ENCODE measurements at regions of chr1 and their contacts with region 1.

Region 1: DNA sequence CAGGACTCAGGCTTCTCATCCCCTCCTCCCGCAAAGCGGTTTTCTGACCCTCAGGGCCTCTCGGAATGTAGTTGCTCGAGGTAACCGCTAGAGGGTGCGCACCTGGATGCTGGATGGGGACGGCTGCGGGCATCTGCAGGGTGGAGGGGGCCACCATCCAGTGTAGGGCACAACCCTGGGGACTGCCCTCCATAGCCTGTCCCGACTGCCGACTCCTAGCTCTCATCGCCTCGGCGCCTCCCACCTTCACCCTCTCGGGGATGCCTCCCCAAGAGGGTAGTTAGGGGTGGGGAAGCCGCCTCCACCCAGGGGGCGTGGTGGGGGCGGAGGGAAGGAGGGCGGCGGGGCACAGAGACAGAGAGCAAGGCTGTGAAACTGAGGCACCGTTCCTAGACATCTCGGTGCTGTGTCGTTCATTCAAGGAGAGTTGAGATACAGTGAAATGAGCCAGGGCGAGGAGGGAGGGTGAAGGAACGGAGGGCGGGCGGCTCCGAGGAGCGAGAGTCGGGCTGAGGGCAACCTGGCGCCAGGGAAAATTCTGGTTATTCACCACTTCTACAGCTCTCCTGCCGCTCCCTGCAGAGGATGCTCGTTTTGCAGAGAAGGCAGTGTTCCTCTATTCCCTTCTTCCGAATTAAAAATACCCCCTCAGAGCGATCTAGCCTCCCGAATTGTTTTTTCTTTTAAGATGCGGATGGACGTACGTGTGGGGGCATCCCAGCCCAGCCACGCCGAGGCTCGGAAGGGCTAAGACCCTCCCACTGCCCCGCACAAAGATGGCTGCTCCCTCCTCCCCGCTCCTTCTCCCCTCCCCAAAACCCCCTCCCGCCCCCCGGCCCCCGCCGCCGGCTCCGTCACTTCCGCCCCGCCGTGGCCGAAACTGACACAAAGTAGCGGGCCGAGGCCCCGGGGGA is at the start of gene ATP8B2:
- DNase-seq: peak; percentile 91
- H3K4me3 Mint-ChIP-seq: peak within 1 kb of the TSS; percentile 98
- H3K27ac Mint-ChIP-seq: peak within 1 kb of the TSS; percentile 94
- H3K4me1 Mint-ChIP-seq: peaks cover 36% of the 10 kb centered on the region
- H3K27me3 Mint-ChIP-seq: no peaks in the 10 kb centered on the region
- total RNA-seq, gene ATP8B2: 58.5 to 59.9 TPM

Region 2: GRCh38 chr1:154256686-154257085 is 68.2 kb before region 1 on chr1:
- CTCF ChIA-PET with region 1: no interaction called
- POLR2A ChIA-PET with region 1: no interaction called
- intact Hi-C with region 1: no loop called
- DNase-seq: no peak
- H3K4me3 Mint-ChIP-seq: no peak overlapping the region
- H3K27ac Mint-ChIP-seq: no peak overlapping the region
- H3K4me1 Mint-ChIP-seq: no peaks in the 10 kb centered on the region
- H3K27me3 Mint-ChIP-seq: no peaks in the 10 kb centered on the region

Region 3: GRCh38 chr1:154304664-154305337 is 20.1 kb before region 1 on chr1:
- CTCF ChIA-PET with region 1: interaction called, 11 read pairs
- POLR2A ChIA-PET with region 1: interaction called, 5 read pairs
- intact Hi-C with region 1: loop called (anchors 2 kb)
- DNase-seq: peak; percentile 83
- H3K4me3 Mint-ChIP-seq: no peak overlapping the region
- H3K27ac Mint-ChIP-seq: peak overlapping the region; percentile 38
- H3K4me1 Mint-ChIP-seq: peaks cover 29% of the 10 kb centered on the region
- H3K27me3 Mint-ChIP-seq: no peaks in the 10 kb centered on the region

Region 4: GRCh38 chr1:154344977-154345837 is 20.3 kb after region 1 on chr1:
- CTCF ChIA-PET with region 1: interaction called, 120 read pairs
- POLR2A ChIA-PET with region 1: interaction called, 7 read pairs
- intact Hi-C with region 1: loop called (anchors 1 kb)
- DNase-seq: peak; percentile 88
- H3K4me3 Mint-ChIP-seq: peak overlapping the region; percentile 61
- H3K27ac Mint-ChIP-seq: peak overlapping the region; percentile 95
- H3K4me1 Mint-ChIP-seq: peaks cover 77% of the 10 kb centered on the region
- H3K27me3 Mint-ChIP-seq: no peaks in the 10 kb centered on the region

Region 5: GRCh38 chr1:154352581-154353459 is 27.9 kb after region 1 on chr1:
- CTCF ChIA-PET with region 1: interaction called, 13 read pairs
- POLR2A ChIA-PET with region 1: no interaction called
- intact Hi-C with region 1: no loop called
- DNase-seq: peak; percentile 81
- H3K4me3 Mint-ChIP-seq: peak overlapping the region; percentile 72
- H3K27ac Mint-ChIP-seq: peak overlapping the region; percentile 82
- H3K4me1 Mint-ChIP-seq: peaks cover 41% of the 10 kb centered on the region
- H3K27me3 Mint-ChIP-seq: no peaks in the 10 kb centered on the region

Region 6: DNA sequence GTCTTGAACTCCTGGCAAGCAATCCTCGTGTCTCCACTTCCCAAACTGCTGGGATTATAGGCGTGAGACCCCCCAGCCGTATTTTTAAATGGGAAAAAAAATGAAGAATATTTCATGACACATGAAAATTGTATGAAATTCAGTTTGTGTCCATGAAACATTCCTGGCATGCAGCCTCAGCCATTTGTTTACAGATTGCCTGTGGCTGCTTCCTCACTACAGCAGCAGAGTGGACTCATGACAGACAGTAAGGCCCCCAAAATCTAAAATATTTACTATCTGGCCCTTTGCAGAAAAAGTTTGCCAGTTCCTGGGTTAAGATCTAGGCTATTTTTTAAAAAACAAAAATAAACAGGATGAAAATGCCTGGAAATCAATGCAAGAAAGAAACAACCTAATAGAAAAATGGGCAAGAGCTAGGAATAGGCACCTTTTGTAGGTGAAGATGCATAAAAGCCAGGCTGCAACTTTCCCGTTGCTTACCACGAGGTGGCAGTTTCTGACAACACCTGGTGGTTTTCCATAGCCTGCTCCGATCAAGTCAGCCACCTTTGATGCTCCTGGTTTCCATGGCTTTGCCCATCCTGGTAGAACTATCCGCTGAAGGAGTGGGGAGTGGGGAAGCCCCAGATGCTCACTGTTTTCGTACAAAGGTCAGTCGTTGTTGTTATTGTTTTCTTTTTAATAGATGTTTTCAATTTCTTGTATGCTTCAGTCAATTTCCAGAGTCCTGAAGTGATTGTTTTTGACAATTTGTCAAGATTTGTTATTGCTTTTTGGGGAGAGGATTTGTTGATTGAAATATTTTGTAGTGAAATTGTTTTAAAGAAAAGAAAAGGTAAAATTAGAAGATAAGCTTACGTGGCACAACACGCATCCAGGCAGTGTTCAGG is 209.3 kb after region 1 on chr1:
- CTCF ChIA-PET with region 1: no interaction called
- POLR2A ChIA-PET with region 1: no interaction called
- intact Hi-C with region 1: no loop called
- DNase-seq: peak; percentile 18
- H3K4me3 Mint-ChIP-seq: no peak overlapping the region
- H3K27ac Mint-ChIP-seq: no peak overlapping the region
- H3K4me1 Mint-ChIP-seq: no peaks in the 10 kb centered on the region
- H3K27me3 Mint-ChIP-seq: peaks cover 1% of the 10 kb centered on the region